ENCODE measurements at regions of chr7 and their contacts with region 1.

Region 1: DNA sequence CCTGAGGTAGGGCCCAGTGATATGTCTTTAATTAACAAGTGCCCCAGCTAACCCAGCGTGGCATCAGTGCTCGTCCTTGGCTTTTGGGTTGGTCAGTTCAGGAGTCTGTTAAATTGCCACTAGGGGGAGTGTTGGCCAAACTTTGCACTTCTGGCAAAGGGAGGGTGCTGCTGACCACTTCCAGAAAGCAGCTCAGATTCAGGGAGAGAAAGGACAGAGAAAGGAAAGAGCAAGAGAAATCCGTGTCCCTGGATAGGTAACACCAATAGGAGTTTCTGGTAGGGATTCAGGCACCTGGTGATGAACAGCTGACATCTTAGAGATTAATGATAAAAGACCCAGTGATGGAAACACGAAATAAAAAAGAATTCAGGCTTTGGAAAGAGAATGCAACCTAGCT is 243.1 kb upstream of the AOAH start:
- DNase-seq: peak; percentile 39 to 74 (median 57)
- H3K4me3 ChIP-seq: no peak overlapping the region
- H3K27ac ChIP-seq: no peak overlapping the region
- H3K4me1 ChIP-seq: no peaks in the 10 kb centered on the region
- H3K27me3 ChIP-seq: no peaks in the 10 kb centered on the region
- CTCF ChIP-seq: peak; percentile 60 to 72 (median 65)
- EP300 ChIP-seq: no peak
- POLR2A ChIP-seq: no peak

Region 2: GRCh38 chr7:37181550-37181932 is 214.2 kb after region 1 on chr7:
- intact Hi-C with region 1: loop called in 3 of 4 experiments (anchors 1 to 5 kb)
- DNase-seq: no peak
- H3K4me3 ChIP-seq: no peak overlapping the region
- H3K27ac ChIP-seq: no peak overlapping the region
- H3K4me1 ChIP-seq: no peaks in the 10 kb centered on the region
- H3K27me3 ChIP-seq: no peaks in the 10 kb centered on the region
- CTCF ChIP-seq: no peak
- EP300 ChIP-seq: no peak
- POLR2A ChIP-seq: no peak

Measured in ovary (tissue), 10 donors.